Tibial artery (tissue), 4 donors: ENCODE measurements at regions of chr16 and their contacts with region 1.

Region 1: DNA sequence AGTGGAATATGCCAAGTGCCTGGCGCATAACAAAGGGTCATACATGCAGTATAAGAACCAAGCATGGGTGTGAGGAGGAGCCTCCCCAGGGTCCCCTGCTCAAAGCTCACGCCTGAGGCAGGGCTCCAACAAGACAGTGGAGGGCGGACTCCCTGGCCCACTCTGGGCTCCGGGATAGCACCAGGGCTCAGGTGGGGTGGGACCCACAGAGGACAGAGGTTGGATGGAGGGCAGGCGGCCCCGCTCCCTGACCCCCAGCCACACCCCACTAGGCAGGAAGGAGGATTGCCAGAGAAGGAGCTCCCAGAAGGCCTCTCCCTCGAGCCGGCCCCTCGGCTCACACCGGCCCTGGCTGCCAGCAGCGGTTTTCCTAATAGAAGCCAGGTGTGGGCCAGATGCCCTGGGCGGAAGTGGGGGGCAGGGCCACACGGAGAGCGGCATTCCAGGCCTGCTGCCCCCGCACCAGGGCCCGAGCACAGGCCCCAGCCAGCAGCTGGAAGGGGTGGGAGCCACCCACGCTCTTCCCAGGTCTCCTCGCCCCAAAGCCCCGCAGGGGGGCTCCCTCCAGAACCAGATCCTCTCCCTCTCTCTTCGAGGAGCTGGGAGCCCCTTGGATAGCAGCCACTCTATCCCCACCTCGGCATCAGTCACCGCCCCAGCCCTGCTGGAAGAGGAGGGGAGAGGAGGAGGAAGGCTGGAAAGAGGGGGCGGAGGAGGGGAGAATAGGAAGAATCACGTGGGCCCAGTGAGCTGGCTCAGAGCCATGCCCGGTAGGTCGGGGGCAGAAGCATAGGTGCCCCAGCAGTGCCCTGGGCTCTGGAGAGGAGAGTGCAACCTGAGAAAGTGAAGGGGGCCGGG is 21.0 kb downstream of the VASN start:
- DNase-seq: peak in 1 of 2 donors; percentile 78
- H3K4me3 ChIP-seq: no peak overlapping the region
- H3K27ac ChIP-seq: peak overlapping the region; percentile 86 to 93
- H3K4me1 ChIP-seq: peaks cover 0 to 61% (median 50%) of the 10 kb centered on the region in 4 donors
- H3K27me3 ChIP-seq: no peaks in the 10 kb centered on the region
- CTCF ChIP-seq: no peak

Region 2: GRCh38 chr16:3950343-3951193 is 442.0 kb before region 1 on chr16:
- intact Hi-C with region 1: loop called (anchors 5 kb)
- DNase-seq: peak; percentile 92 to 95
- H3K4me3 ChIP-seq: peak overlapping the region; percentile 36 to 38
- H3K27ac ChIP-seq: peak overlapping the region; percentile 90 to 91
- H3K4me1 ChIP-seq: peaks cover 0 to 65% (median 41%) of the 10 kb centered on the region in 4 donors
- H3K27me3 ChIP-seq: no peaks in the 10 kb centered on the region
- CTCF ChIP-seq: no peak